GM12878 (cell line): ENCODE measurements at regions of chr6 and their contacts with region 1.

Region 1: DNA sequence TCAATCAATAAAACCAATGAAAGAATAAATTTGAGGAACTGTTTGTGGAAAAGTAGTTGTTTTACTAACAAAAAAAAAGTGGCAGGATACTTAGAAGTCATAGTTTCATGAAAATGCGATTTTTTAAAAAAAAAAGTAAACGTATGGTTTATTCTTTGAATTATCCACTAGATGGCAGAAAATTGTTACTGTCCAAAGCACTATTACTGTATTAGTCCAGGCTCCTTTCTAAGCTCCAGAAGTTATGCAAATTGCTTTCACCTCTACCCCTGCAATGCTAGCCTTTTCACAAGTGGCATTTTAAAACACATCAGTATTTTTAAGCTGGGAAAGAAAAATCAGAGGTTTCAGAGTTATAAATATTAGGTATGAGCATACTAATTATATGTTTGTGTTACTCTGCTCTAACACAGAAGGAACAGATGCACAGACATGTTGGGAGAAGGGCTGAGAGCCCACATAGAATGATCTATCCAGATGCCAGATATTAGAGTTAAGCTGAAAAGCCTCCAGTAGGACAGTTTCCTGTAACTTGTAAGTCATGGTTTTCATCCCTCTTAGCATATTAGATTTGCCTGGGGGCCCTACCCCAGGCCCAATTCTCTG is 63.9 kb downstream of the FHL5 start:
- DNase-seq: peak; percentile 49
- ATAC-seq: peak; percentile 93
- H3K4me3 ChIP-seq: no peak overlapping the region
- H3K27ac ChIP-seq: no peak overlapping the region
- H3K4me1 ChIP-seq: peaks cover 3% of the 10 kb centered on the region
- H3K27me3 ChIP-seq: no peaks in the 10 kb centered on the region
- CTCF ChIP-seq: peak in 2 of 3 experiments; percentile 42 to 64; a peak in 5 of 6 replicates
- EP300 ChIP-seq: no peak
- POLR2A ChIP-seq: no peak
- RAD21 ChIP-seq: peak; percentile 80

Region 2: GRCh38 chr6:96468681-96469224 is 158.1 kb before region 1 on chr6:
- CTCF ChIA-PET with region 1: no interaction called
- POLR2A ChIA-PET with region 1: no interaction called
- RAD21 ChIA-PET with region 1: no interaction called
- SMC1A ChIA-PET with region 1: no interaction called
- in situ Hi-C with region 1: no loop called
- intact Hi-C with region 1: no loop called
- DNase-seq: no peak
- ATAC-seq: peak; percentile 56; the same call in 2 of the 3 replicates
- H3K4me3 ChIP-seq: no peak overlapping the region
- H3K27ac ChIP-seq: no peak overlapping the region
- H3K4me1 ChIP-seq: peaks cover 3% of the 10 kb centered on the region
- H3K27me3 ChIP-seq: no peaks in the 10 kb centered on the region
- CTCF ChIP-seq: peak in 1 of 3 experiments; percentile 32; a peak in 1 of 6 replicates
- EP300 ChIP-seq: no peak
- POLR2A ChIP-seq: no peak
- RAD21 ChIP-seq: 0 out of 2 replicates have a peak, but pooled peaks have one; percentile 2

Region 3: GRCh38 chr6:96611342-96611991 is 15.4 kb before region 1 on chr6:
- CTCF ChIA-PET with region 1: interaction called, 9 read pairs
- POLR2A ChIA-PET with region 1: interaction called, 5 read pairs
- RAD21 ChIA-PET with region 1: interaction called, 5 read pairs
- SMC1A ChIA-PET with region 1: interaction called, 39 read pairs
- in situ Hi-C with region 1: no loop called
- intact Hi-C with region 1: no loop called
- DNase-seq: no peak
- ATAC-seq: peak; percentile 86
- H3K4me3 ChIP-seq: no peak overlapping the region
- H3K27ac ChIP-seq: 0 out of 2 replicates have a peak overlapping the region, but pooled peaks have one; percentile 4
- H3K4me1 ChIP-seq: peaks cover 34% of the 10 kb centered on the region
- H3K27me3 ChIP-seq: no peaks in the 10 kb centered on the region
- CTCF ChIP-seq: no peak
- EP300 ChIP-seq: peak; percentile 75 to 88; a peak in 3 of 4 replicates
- POLR2A ChIP-seq: no peak
- RAD21 ChIP-seq: no peak

Region 4: DNA sequence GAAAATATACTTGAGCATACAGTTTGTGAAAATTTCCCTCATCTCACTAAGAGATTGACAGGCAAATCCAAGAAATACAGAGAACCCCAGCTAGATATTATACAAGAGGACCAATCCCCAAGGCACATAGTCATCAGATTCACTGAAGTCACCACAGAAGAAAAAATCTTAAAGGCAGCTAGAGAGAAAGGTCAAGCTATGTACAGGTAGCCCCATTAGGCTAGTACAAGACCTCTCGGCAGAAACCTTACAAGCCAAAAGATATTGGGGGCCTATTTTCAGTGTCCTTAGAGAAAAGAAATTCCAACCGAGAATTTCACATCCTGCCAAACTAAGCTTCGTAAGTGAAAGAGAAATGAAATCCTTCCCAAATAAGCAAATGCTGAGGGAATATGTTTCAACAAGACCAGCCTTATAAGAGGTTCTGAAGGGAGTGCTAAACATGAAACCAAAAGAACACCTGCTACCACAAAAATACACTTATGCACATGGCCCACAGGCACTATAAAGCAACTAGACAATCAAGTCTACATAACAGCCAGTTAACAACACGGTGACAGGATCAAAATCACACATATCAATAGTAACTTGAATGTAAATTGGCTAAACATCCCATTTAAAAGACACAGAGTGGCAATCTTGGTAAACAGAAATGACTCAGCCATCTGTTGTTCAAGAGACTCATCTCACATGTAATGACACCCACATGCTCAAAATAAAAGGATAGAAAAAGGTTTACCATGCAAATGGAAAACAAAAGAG is 32.4 kb after region 1 on chr6:
- CTCF ChIA-PET with region 1: interaction called, 21 read pairs
- POLR2A ChIA-PET with region 1: no interaction called
- RAD21 ChIA-PET with region 1: interaction called, 6 read pairs
- SMC1A ChIA-PET with region 1: interaction called, 3 read pairs
- in situ Hi-C with region 1: no loop called
- intact Hi-C with region 1: no loop called
- DNase-seq: no peak
- ATAC-seq: peak; percentile 87
- H3K4me3 ChIP-seq: no peak overlapping the region
- H3K27ac ChIP-seq: no peak overlapping the region
- H3K4me1 ChIP-seq: no peaks in the 10 kb centered on the region
- H3K27me3 ChIP-seq: no peaks in the 10 kb centered on the region
- CTCF ChIP-seq: no peak
- EP300 ChIP-seq: no peak
- POLR2A ChIP-seq: no peak
- RAD21 ChIP-seq: no peak

Region 5: DNA sequence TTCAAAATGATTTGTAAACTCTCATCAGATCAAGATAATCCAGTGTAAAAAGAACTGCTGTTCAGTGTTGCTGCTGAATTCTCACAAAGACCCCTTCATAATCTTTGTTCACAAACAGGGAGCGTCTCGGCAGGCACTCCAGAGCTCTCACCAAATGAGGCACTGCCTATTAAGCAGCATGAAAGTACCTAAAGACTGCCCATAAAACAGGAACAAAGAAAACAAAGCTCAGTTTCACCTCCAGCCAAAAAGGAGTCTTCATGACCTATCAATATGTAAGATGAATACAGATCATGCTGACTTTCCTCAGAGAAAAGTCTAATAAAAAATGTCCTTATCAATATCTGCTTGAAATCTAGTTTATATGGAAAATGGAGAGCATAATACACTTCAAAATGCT is 168.6 kb after region 1 on chr6:
- CTCF ChIA-PET with region 1: interaction called, 10 read pairs
- POLR2A ChIA-PET with region 1: no interaction called
- RAD21 ChIA-PET with region 1: interaction called, 3 read pairs
- SMC1A ChIA-PET with region 1: interaction called, 10 read pairs
- in situ Hi-C with region 1: no loop called
- intact Hi-C with region 1: no loop called
- DNase-seq: peak; percentile 76
- ATAC-seq: peak; percentile 98
- H3K4me3 ChIP-seq: 0 out of 2 replicates have a peak overlapping the region, but pooled peaks have one; percentile 2
- H3K27ac ChIP-seq: peak overlapping the region; percentile 84
- H3K4me1 ChIP-seq: peaks cover 14% of the 10 kb centered on the region; the same call in 1 of the 2 replicates
- H3K27me3 ChIP-seq: no peaks in the 10 kb centered on the region
- CTCF ChIP-seq: no peak
- EP300 ChIP-seq: peak in 1 of 2 experiments; percentile 72; a peak in 2 of 4 replicates
- POLR2A ChIP-seq: no peak
- RAD21 ChIP-seq: no peak

Region 6: DNA sequence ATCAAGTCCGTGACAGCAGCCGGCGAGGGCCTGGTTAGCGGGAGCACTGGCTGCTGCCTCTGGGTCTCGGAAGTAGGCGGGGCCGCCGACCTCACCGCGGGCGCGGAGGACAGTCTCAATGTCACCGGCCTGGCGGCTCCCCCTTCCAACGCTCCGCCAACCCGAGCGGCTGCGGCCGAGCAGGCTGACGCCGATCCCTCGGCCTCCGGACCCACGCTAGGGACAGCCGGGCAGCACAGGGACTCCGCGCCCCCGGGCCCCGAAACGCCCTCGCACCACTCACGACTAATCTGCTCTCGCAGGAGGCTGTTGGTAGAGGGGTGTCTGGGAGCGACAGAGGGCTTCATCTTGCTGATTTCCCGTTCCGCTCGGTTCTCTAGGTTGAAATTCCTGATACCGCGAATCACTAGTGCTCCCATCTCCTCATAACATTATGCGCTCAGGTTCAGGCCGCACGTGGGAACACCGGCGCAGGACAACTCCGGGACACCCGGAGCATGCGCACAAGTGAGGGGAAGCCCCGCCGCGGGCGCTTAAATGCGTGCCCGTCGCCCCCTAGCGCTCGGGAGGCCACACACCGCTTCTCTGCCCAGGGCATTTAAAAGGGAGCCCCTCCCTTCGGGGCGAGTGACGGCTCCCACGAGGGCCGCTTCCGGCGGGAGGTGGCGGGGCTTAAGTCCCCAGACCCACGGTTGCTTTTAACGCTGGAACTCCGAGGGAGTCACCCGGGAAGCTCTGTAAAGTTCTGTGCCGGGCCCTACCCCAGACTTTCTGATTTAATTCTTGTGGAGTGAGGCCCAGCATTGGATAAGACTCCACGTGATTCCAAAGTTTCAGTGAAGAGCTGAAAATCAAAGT is 270.8 kb after region 1 on chr6 and contains the start of gene NDUFAF4:
- CTCF ChIA-PET with region 1: interaction called, 43 read pairs
- POLR2A ChIA-PET with region 1: no interaction called
- RAD21 ChIA-PET with region 1: interaction called, 17 read pairs
- SMC1A ChIA-PET with region 1: interaction called, 56 read pairs
- in situ Hi-C with region 1: loop called (anchors 5 kb)
- intact Hi-C with region 1: loop called (anchors 1 kb)
- DNase-seq: peak; percentile 72
- ATAC-seq: peak; percentile 92
- H3K4me3 ChIP-seq: peak within 1 kb of the TSS; percentile 84
- H3K27ac ChIP-seq: peak within 1 kb of the TSS; percentile 79
- H3K4me1 ChIP-seq: no peaks in the 10 kb centered on the region
- H3K27me3 ChIP-seq: no peaks in the 10 kb centered on the region
- CTCF ChIP-seq: peak; percentile 89 to 96 (median 94)
- EP300 ChIP-seq: no peak
- POLR2A ChIP-seq: peak; percentile 77
- RAD21 ChIP-seq: peak; percentile 84
- polyA plus RNA-seq, gene NDUFAF4: 181 to 187 TPM

Region 7: GRCh38 chr6:97053643-97054411 is 427.0 kb after region 1 on chr6:
- CTCF ChIA-PET with region 1: interaction called, 42 read pairs
- POLR2A ChIA-PET with region 1: no interaction called
- RAD21 ChIA-PET with region 1: interaction called, 64 read pairs
- SMC1A ChIA-PET with region 1: interaction called, 86 read pairs
- in situ Hi-C with region 1: loop called (anchors 5 kb)
- intact Hi-C with region 1: loop called (anchors 1 kb)
- DNase-seq: no peak
- ATAC-seq: no peak
- H3K4me3 ChIP-seq: no peak overlapping the region
- H3K27ac ChIP-seq: no peak overlapping the region
- H3K4me1 ChIP-seq: peaks cover 6% of the 10 kb centered on the region
- H3K27me3 ChIP-seq: no peaks in the 10 kb centered on the region
- CTCF ChIP-seq: peak in 2 of 3 experiments; percentile 29 to 36; a peak in 3 of 6 replicates
- EP300 ChIP-seq: no peak
- POLR2A ChIP-seq: no peak
- RAD21 ChIP-seq: peak; percentile 48

Region 8: GRCh38 chr6:97077380-97077779 is 450.5 kb after region 1 on chr6:
- CTCF ChIA-PET with region 1: interaction called, 7 read pairs
- POLR2A ChIA-PET with region 1: no interaction called
- RAD21 ChIA-PET with region 1: no interaction called
- SMC1A ChIA-PET with region 1: interaction called, 10 read pairs
- in situ Hi-C with region 1: no loop called
- intact Hi-C with region 1: no loop called
- DNase-seq: no peak
- ATAC-seq: no peak
- H3K4me3 ChIP-seq: no peak overlapping the region
- H3K27ac ChIP-seq: no peak overlapping the region
- H3K4me1 ChIP-seq: no peaks in the 10 kb centered on the region
- H3K27me3 ChIP-seq: no peaks in the 10 kb centered on the region
- CTCF ChIP-seq: no peak
- EP300 ChIP-seq: no peak
- POLR2A ChIP-seq: no peak
- RAD21 ChIP-seq: no peak